ENCODE measurements at regions of chr1 and their contacts with region 1.

Region 1: GRCh38 chr1:9101510-9102146 is 27.3 kb downstream of the GPR157 start:
- DNase-seq: peak; percentile 65
- H3K4me3 Mint-ChIP-seq: no peak overlapping the region
- H3K27ac Mint-ChIP-seq: no peak overlapping the region
- H3K4me1 Mint-ChIP-seq: no peaks in the 10 kb centered on the region
- H3K27me3 Mint-ChIP-seq: no peaks in the 10 kb centered on the region
- CTCF ChIP-seq: peak; percentile 57

Region 2: GRCh38 chr1:8910914-8911313 is 190.7 kb before region 1 on chr1:
- CTCF ChIA-PET with region 1: interaction called, 11 read pairs
- POLR2A ChIA-PET with region 1: interaction called, 3 read pairs
- intact Hi-C with region 1: no loop called
- DNase-seq: peak; percentile 44
- H3K4me3 Mint-ChIP-seq: no peak overlapping the region
- H3K27ac Mint-ChIP-seq: peak overlapping the region; percentile 75
- H3K4me1 Mint-ChIP-seq: peaks cover 24% of the 10 kb centered on the region
- H3K27me3 Mint-ChIP-seq: no peaks in the 10 kb centered on the region
- CTCF ChIP-seq: no peak

Region 3: GRCh38 chr1:9143250-9143649 is 41.6 kb after region 1 on chr1:
- CTCF ChIA-PET with region 1: no interaction called
- POLR2A ChIA-PET with region 1: no interaction called
- intact Hi-C with region 1: no loop called
- DNase-seq: peak; percentile 76
- H3K4me3 Mint-ChIP-seq: no peak overlapping the region
- H3K27ac Mint-ChIP-seq: no peak overlapping the region
- H3K4me1 Mint-ChIP-seq: peaks cover 10% of the 10 kb centered on the region
- H3K27me3 Mint-ChIP-seq: no peaks in the 10 kb centered on the region
- CTCF ChIP-seq: no peak

Region 4: GRCh38 chr1:9225468-9225785 is 123.8 kb after region 1 on chr1:
- CTCF ChIA-PET with region 1: no interaction called
- POLR2A ChIA-PET with region 1: no interaction called
- intact Hi-C with region 1: no loop called
- DNase-seq: no peak
- H3K4me3 Mint-ChIP-seq: no peak overlapping the region
- H3K27ac Mint-ChIP-seq: no peak overlapping the region
- H3K4me1 Mint-ChIP-seq: peaks cover 4% of the 10 kb centered on the region
- H3K27me3 Mint-ChIP-seq: no peaks in the 10 kb centered on the region
- CTCF ChIP-seq: no peak